ENCODE measurements at regions of chr16 and their contacts with region 1.

Region 1: DNA sequence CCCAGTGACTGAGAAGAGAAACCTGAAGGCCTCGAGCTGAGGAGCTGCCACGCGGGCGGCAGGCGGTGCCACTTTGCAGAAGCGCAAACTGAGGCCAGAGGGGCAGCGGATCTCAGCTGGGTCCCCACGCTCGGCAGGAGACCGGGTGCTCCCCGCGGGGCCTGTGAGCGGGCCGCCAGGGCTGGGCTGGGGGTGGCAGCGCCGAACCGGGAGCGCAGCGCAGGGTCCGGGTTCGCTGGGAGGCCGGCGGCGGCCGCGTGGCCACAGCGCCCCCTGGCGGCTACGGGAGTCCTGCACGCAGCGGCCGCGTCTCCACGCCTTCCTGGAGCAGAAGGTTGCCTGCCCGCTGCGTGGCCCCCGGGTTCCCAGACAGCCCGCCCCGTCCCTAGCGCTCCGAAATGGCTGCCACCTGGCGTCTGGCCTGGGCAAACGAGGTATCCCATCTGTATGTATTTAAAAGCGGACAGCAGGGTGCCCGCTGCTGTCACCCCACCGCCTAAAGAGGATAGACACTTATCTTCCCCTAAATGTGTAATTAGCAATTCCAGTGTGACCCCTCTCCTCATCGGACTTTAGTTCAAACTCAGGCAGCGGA is 96.1 kb upstream of the CDH5 start:
- DNase-seq: peak; percentile 66 to 90 (median 72)
- ATAC-seq: peak in 3 of 4 donors; percentile 56 to 82 (median 79)
- H3K4me3 ChIP-seq: peak overlapping the region in 10 of 12 donors; percentile 31 to 53 (median 41)
- H3K27ac ChIP-seq: peak overlapping the region in 8 of 12 donors; percentile 1 to 57 (median 48)
- H3K4me1 ChIP-seq: peaks cover 0 to 35% (median 14%) of the 10 kb centered on the region in 12 donors
- H3K27me3 ChIP-seq: peaks cover 0 to 6% (median 0%) of the 10 kb centered on the region in 9 donors
- CTCF ChIP-seq: peak; percentile 82 to 100 (median 98)
- POLR2A ChIP-seq: no peak

Region 2: DNA sequence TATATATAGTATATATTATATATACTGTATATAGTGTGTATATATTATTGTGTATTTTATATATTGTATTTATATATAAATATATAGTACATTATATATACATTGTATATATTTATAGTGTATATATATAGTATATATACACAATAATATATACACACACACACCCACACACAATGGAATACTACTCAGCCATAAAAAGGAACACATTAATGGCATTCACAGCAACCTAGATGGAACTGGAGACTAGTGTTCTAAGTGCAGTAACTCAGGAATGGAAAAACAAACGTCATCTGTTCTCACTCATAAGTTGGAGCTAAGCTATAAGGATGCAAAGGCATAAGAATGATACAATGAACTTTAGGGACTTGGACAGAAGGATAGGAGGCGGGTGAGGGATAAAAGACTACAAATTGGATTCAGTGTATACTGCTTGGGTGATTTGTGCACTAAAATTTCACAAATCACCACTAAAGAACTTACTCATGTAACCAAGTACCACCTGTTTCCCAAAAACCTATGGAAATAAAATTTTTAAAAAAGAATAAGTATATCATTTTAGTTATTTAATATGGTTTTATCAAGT is 946.7 kb before region 1 on chr16:
- intact Hi-C with region 1: loop called in 1 of 10 experiments (anchors 10 kb)
- DNase-seq: no peak
- ATAC-seq: no peak
- H3K4me3 ChIP-seq: no peak overlapping the region
- H3K27ac ChIP-seq: no peak overlapping the region
- H3K4me1 ChIP-seq: no peaks in the 10 kb centered on the region
- H3K27me3 ChIP-seq: no peaks in the 10 kb centered on the region
- CTCF ChIP-seq: no peak
- POLR2A ChIP-seq: no peak

Region 3: DNA sequence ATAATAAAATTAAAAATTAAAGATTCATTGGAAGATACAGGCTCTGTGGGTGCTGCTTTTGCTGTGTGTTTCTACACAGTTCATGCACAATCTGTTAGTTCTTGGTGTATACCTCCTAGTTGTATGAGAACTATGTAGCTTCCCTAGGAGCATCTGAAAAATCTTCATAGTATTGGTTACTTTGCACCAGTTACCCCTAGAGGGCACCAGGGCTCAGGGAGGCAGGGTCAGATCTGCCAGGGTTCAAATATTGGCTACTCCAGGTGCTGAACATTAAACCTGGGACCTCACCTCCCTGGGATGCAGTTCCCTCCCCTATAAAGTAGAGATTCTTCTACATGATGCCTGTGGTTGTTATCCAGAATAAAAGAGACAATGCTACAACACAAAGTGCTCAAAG is 565.6 kb before region 1 on chr16:
- intact Hi-C with region 1: loop called in 1 of 10 experiments (anchors 5 kb)
- DNase-seq: no peak
- ATAC-seq: no peak
- H3K4me3 ChIP-seq: no peak overlapping the region
- H3K27ac ChIP-seq: no peak overlapping the region
- H3K4me1 ChIP-seq: peaks cover 0 to 8% (median under 1%) of the 10 kb centered on the region in 12 donors
- H3K27me3 ChIP-seq: no peaks in the 10 kb centered on the region
- CTCF ChIP-seq: peak in 6 of 12 donors; percentile 9 to 38 (median 22)
- POLR2A ChIP-seq: no peak

Region 4: GRCh38 chr16:66135421-66135831 is 135.0 kb before region 1 on chr16:
- intact Hi-C with region 1: no loop called
- DNase-seq: peak in 4 of 5 donors; percentile 64 to 83 (median 70)
- ATAC-seq: peak; percentile 87 to 96 (median 92)
- H3K4me3 ChIP-seq: no peak overlapping the region
- H3K27ac ChIP-seq: peak overlapping the region in 7 of 12 donors; percentile 4 to 67 (median 21)
- H3K4me1 ChIP-seq: peaks cover 0 to 20% (median 13%) of the 10 kb centered on the region in 12 donors
- H3K27me3 ChIP-seq: no peaks in the 10 kb centered on the region
- CTCF ChIP-seq: no peak
- POLR2A ChIP-seq: no peak

Region 5: DNA sequence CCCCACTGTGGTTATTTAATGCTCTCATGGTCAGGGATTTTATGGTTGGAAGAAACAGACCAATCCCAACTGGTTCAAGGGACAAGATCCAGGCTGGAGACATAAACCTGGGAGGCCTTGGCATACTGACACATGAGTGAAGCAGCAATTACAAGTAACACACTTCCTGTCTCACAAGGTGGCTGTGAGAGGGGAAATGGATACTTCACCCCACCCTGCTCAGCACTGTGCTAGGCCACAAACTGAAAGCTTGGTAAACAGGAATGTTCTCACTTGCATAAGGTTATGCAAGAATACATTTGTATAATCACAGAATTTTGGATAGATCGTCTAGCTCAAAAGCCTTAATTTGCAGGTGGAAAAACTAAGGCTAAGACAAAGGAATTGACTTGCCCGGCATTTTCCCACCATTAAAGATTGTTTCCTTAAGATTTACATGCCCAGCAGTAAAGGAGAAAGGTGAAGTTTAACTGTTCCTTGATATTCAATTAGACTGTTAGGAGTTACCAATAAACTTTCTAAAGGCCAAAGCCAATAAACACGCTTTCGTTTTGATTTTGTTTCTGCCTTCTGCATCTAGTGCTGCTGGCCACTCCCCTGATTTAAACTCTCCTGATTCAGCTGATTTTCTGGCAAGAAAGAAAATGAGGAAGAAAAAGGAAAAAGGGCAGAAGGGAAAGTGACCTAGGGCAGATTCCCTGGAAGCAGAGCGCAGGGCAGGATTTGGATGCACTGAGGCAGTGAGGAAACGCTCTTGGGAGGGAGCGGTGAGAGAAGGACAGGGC is 119.5 kb before region 1 on chr16:
- intact Hi-C with region 1: no loop called
- DNase-seq: no peak
- ATAC-seq: peak in 3 of 4 donors; percentile 51 to 72 (median 66)
- H3K4me3 ChIP-seq: no peak overlapping the region
- H3K27ac ChIP-seq: peak overlapping the region in 5 of 12 donors; percentile 2 to 48 (median 4)
- H3K4me1 ChIP-seq: peaks cover 0 to 22% (median 5%) of the 10 kb centered on the region in 12 donors
- H3K27me3 ChIP-seq: no peaks in the 10 kb centered on the region
- CTCF ChIP-seq: no peak
- POLR2A ChIP-seq: no peak

Measured in heart left ventricle (tissue), 16 donors.